Head of caudate nucleus (tissue), 42 donors: ENCODE measurements at regions of chr2 and their contacts with region 1.

Region 1: DNA sequence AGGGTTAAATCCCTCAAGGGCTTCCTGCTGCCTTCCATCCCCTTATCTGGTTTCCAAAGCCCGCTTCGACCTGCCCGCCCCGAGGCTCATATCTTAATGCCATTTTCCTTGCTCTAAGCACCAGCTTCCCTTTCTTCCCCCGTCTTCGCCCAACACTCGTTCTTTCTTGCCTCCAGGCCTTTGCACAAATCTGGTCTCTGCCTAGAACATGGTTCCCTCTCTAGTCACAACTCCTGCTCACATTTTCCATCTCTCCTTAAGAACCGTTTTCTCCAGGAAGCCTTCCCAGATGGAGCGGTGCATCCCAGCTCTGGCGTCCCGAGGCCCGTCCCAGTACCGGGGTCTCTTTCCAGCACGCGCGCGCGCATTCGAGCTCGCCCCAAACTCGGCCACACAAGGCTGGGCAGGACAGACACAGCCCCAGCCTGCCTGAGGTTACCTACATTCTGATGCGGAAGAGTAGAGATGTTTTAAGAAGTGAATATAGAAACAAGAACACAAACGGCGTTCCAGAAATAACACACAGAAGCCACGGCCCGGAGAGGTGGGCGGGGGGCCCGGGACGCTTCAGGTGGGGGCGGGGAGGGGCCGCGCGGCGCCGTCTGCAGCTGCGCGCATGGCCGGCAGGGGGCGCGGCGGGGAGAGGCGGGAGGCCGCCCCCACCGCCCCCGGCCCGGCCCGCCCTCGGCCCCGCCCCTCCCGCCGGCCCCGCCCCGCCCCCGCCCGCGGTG is at the start of gene DGKD:
- DNase-seq: peak in 33 of 42 donors; percentile 36 to 83 (median 65)

Region 2: GRCh38 chr2:233387667-233388528 is 34.0 kb after region 1 on chr2:
- intact Hi-C with region 1: loop called (anchors 5 kb)
- DNase-seq: peak; percentile 66 to 95 (median 86)

Region 3: GRCh38 chr2:233443468-233444183 is 89.7 kb after region 1 on chr2:
- intact Hi-C with region 1: loop called (anchors 10 kb)
- DNase-seq: peak; percentile 65 to 92 (median 80)